ENCODE measurements at regions of chr12 and their contacts with region 1.

Region 1: DNA sequence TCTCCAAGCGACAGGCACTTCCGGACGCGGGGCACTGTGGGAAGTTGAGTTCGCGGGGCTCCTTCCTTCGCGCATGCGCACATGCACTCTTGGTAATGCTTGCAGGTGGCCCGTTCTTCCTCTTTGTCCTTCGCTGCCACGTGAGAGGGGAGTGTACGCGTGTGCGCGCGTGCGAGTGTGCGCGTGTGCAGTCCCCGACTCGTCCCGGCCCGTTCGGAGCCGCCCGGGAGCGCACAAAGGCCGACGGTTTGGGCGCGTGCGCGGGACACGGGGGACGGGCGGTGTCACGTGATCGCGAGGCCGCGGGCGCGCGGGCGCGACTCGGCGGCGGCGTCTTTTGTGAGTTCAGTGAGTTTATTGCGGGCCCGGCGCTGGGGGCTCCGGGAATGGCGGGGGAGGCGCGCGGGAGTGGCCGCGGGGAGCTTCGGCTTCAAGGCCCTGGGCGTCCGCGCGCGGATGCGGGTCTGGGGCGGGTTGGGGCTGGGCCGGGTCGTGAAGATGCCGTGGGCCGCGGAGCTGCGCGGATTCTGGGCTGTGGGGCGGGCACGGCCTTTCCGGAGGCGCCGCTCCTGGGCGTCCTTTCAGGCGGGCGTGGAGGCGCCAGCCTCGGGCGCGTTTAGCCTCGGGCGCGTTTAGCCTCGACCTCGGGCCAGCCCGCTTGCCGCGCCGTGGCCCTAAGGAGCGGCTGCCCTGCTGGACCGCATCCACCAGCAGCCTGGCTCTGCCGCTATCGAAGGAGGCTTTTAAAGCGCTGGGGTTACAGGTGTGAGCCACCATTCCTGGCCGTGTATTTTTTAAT is at the start of gene ZNF84:
- DNase-seq: peak; percentile 90 to 97 (median 92)
- ATAC-seq: peak; percentile 96
- H3K4me3 ChIP-seq: peak within 1 kb of the TSS; percentile 74
- H3K27ac ChIP-seq: peak within 1 kb of the TSS; percentile 98
- H3K4me1 ChIP-seq: peaks cover 3 to 10% of the 10 kb centered on the region in 2 experiments; a peak in 1 of 5 replicates
- H3K27me3 ChIP-seq: no peaks in the 10 kb centered on the region
- CTCF ChIP-seq: no peak
- EP300 ChIP-seq: peak; percentile 8; the same call in 1 of the 2 replicates
- POLR2A ChIP-seq: peak; percentile 75
- RAD21 ChIP-seq: no peak
- polyA plus RNA-seq, gene ZNF84: 8.8 to 12.1 TPM

Region 2: GRCh38 chr12:132948146-132949066 is 89.0 kb before region 1 on chr12:
- CTCF ChIA-PET with region 1: no interaction called
- POLR2A ChIA-PET with region 1: no interaction called
- in situ Hi-C with region 1: no loop called
- intact Hi-C with region 1: no loop called
- DNase-seq: no peak
- ATAC-seq: no peak
- H3K4me3 ChIP-seq: no peak overlapping the region
- H3K27ac ChIP-seq: no peak overlapping the region
- H3K4me1 ChIP-seq: no peaks in the 10 kb centered on the region
- H3K27me3 ChIP-seq: no peaks in the 10 kb centered on the region; a peak in 1 of 5 replicates
- CTCF ChIP-seq: no peak
- EP300 ChIP-seq: no peak
- POLR2A ChIP-seq: no peak
- RAD21 ChIP-seq: no peak

Region 3: DNA sequence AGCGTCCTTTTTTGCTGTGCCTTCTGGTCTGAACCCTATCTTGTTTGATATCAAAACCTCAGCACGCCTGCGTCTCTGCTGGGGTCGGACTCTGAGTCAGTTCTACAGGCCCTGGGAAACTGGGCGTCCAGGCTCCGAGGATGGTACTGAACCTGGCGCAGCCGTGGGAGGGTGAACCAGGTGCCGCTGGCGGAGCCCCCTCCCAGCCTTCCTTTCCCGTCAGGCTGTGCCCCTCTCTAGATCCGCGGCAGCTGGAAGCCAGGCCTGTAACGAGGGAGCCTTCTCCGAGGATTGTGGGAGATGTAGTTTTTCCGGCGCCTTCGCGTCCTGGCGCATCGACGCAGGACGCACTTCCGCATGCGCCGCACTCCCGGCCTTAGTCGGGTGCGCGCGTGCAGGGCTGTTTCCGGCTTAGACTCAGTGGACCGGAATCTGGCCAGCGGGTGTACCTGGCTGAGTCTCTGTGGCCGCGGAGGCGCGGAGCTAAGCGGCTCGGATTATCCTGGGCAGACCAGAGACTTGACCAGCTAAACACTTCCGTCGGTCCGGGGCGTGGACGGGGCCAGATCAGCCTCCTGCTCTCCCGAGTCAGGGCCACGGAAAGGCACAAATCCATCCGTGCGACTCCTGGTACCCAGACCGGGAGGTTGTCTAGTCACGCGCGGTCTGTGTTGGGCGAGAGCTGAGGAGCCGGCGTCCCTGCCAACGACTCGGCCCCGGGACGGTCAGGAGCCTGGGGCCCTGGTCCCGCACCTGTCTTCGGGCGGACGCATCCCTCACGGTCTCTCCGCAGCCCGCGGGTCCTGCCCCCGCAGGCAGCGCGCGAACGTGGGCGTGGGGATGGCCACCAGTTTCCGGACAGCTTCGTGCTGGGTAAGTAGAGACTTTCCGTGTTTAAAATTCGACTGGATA is 51.1 kb before region 1 on chr12 and contains the start of gene ZNF26:
- CTCF ChIA-PET with region 1: no interaction called
- POLR2A ChIA-PET with region 1: interaction called, 3 read pairs
- in situ Hi-C with region 1: no loop called
- intact Hi-C with region 1: loop called (anchors 5 kb)
- DNase-seq: peak; percentile 87 to 96 (median 89)
- ATAC-seq: peak; percentile 99
- H3K4me3 ChIP-seq: peak within 1 kb of the TSS; percentile 85
- H3K27ac ChIP-seq: peak within 1 kb of the TSS; percentile 60
- H3K4me1 ChIP-seq: peaks cover 4 to 13% of the 10 kb centered on the region in 2 experiments; a peak in 3 of 5 replicates
- H3K27me3 ChIP-seq: no peaks in the 10 kb centered on the region
- CTCF ChIP-seq: no peak
- EP300 ChIP-seq: no peak
- POLR2A ChIP-seq: peak; percentile 84
- RAD21 ChIP-seq: no peak
- polyA plus RNA-seq, gene ZNF26: 1.2 to 1.4 TPM

Region 4: GRCh38 chr12:133181238-133181959 is 144.0 kb after region 1 on chr12 and contains the start of gene ZNF268:
- CTCF ChIA-PET with region 1: no interaction called
- POLR2A ChIA-PET with region 1: no interaction called
- in situ Hi-C with region 1: no loop called
- intact Hi-C with region 1: loop called (anchors 1 kb)
- DNase-seq: peak; percentile 95 to 96 (median 96)
- ATAC-seq: peak; percentile 99
- H3K4me3 ChIP-seq: peak within 1 kb of the TSS; percentile 88
- H3K27ac ChIP-seq: peak within 1 kb of the TSS; percentile 78
- H3K4me1 ChIP-seq: no peaks in the 10 kb centered on the region
- H3K27me3 ChIP-seq: no peaks in the 10 kb centered on the region
- CTCF ChIP-seq: peak; percentile 84 to 95 (median 93)
- EP300 ChIP-seq: peak; percentile 54
- POLR2A ChIP-seq: peak; percentile 84
- RAD21 ChIP-seq: peak; percentile 60 to 62
- polyA plus RNA-seq, gene ZNF268: 6.5 to 7.7 TPM